ENCODE measurements at regions of chr3 and their contacts with region 1.

Region 1: GRCh38 chr3:104628185-104628789 is 738.4 kb upstream of the ALCAM start:
- DNase-seq: peak; percentile 66
- H3K4me3 ChIP-seq: no peak overlapping the region
- H3K27ac ChIP-seq: peak overlapping the region; percentile 61
- H3K4me1 ChIP-seq: peaks cover 14% of the 10 kb centered on the region
- H3K27me3 ChIP-seq: no peaks in the 10 kb centered on the region
- CTCF ChIP-seq: peak; percentile 58 to 61
- POLR2A ChIP-seq: no peak

Region 2: DNA sequence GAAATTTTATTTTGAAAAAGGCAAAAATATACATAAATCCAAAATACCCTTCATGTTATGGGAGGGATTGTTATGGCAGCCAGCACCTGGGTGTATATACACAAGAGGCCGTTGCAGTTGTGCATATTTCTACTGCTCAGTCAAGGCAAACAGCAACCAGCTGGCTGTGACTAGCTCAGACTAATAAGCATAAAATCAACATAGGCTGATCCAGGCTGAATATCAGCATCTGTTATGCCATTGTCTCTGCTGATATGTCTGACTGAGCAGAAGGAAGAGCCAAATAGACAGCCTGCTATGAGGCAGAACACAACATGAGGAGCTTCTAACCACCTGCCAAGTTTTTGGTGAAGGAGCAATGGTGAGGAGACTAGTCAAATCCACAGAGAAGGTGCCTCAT is 280.9 kb after region 1 on chr3:
- CTCF ChIA-PET with region 1: interaction called, 4 read pairs
- POLR2A ChIA-PET with region 1: no interaction called
- dilution Hi-C with region 1: no loop called
- intact Hi-C with region 1: loop called (anchors 2 kb)
- DNase-seq: peak; percentile 85
- H3K4me3 ChIP-seq: peak overlapping the region in 1 of 3 experiments; percentile 52
- H3K27ac ChIP-seq: peak overlapping the region; percentile 99
- H3K4me1 ChIP-seq: peaks cover 29% of the 10 kb centered on the region
- H3K27me3 ChIP-seq: no peaks in the 10 kb centered on the region
- CTCF ChIP-seq: no peak
- POLR2A ChIP-seq: peak; percentile 31

Region 3: GRCh38 chr3:104939196-104939595 is 310.9 kb after region 1 on chr3:
- CTCF ChIA-PET with region 1: no interaction called
- POLR2A ChIA-PET with region 1: no interaction called
- dilution Hi-C with region 1: no loop called
- intact Hi-C with region 1: no loop called
- DNase-seq: peak; percentile 45
- H3K4me3 ChIP-seq: no peak overlapping the region
- H3K27ac ChIP-seq: no peak overlapping the region
- H3K4me1 ChIP-seq: no peaks in the 10 kb centered on the region
- H3K27me3 ChIP-seq: no peaks in the 10 kb centered on the region
- CTCF ChIP-seq: no peak
- POLR2A ChIP-seq: no peak

Region 4: GRCh38 chr3:104987859-104988258 is 359.6 kb after region 1 on chr3:
- CTCF ChIA-PET with region 1: no interaction called
- POLR2A ChIA-PET with region 1: no interaction called
- dilution Hi-C with region 1: no loop called
- intact Hi-C with region 1: loop called (anchors 10 kb)
- DNase-seq: no peak
- H3K4me3 ChIP-seq: no peak overlapping the region
- H3K27ac ChIP-seq: no peak overlapping the region
- H3K4me1 ChIP-seq: no peaks in the 10 kb centered on the region
- H3K27me3 ChIP-seq: no peaks in the 10 kb centered on the region
- CTCF ChIP-seq: no peak
- POLR2A ChIP-seq: no peak